H1 (cell line): ENCODE measurements at regions of chr4 and their contacts with region 1.

Region 1: DNA sequence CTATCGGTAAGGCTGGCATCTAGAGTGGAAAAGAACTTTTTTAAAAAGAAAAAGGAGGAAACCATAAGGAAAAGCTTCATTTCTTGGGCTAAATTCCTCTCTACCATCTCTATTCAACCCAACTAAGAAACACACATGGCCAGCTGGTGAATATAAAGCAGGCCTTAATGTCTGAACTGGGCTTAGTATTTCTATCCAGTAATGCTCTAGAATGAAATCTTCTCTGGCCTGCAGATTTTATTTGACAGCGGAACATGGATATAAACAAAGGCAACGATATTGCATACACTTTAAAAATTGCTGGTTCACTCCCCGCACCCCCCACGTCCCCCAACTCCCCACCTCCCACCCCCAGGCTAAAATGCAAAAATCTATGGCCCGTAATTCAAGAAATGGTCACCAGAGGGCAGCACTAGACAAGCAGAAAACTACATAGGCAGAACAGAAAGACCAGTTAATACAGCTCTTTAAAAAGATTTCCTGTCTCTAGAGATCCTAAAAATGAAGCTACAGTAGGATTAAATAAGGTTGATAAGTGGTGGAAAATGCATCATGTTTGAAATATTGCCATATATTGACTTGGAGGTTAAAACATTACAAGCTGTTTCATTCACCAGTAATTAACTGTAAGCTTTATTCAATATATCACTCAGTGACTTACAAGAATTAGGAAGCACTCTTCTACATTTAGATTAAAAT is 155.2 kb upstream of the GALNT7 start:
- DNase-seq: peak in 1 of 2 experiments; percentile 88
- H3K4me3 ChIP-seq: no peak overlapping the region
- H3K27ac ChIP-seq: no peak overlapping the region
- H3K4me1 ChIP-seq: peaks cover 0 to 3% (median 1%) of the 10 kb centered on the region in 4 experiments; a peak in 4 of 7 replicates
- H3K27me3 ChIP-seq: no peaks in the 10 kb centered on the region
- CTCF ChIP-seq: peak in 2 of 3 experiments; percentile 46 to 69; a peak in 3 of 4 replicates
- EP300 ChIP-seq: no peak
- POLR2A ChIP-seq: no peak
- RAD21 ChIP-seq: peak; percentile 80 to 86

Region 2: GRCh38 chr4:172666711-172667368 is 346.5 kb before region 1 on chr4:
- CTCF ChIA-PET with region 1: no interaction called
- POLR2A ChIA-PET with region 1: no interaction called
- DNase-seq: no peak
- H3K4me3 ChIP-seq: no peak overlapping the region
- H3K27ac ChIP-seq: no peak overlapping the region
- H3K4me1 ChIP-seq: no peaks in the 10 kb centered on the region; a peak in 2 of 7 replicates
- H3K27me3 ChIP-seq: no peaks in the 10 kb centered on the region
- CTCF ChIP-seq: peak in 1 of 3 experiments; percentile 54; a peak in 2 of 4 replicates
- EP300 ChIP-seq: no peak
- POLR2A ChIP-seq: no peak
- RAD21 ChIP-seq: peak; percentile 66 to 71

Region 3: DNA sequence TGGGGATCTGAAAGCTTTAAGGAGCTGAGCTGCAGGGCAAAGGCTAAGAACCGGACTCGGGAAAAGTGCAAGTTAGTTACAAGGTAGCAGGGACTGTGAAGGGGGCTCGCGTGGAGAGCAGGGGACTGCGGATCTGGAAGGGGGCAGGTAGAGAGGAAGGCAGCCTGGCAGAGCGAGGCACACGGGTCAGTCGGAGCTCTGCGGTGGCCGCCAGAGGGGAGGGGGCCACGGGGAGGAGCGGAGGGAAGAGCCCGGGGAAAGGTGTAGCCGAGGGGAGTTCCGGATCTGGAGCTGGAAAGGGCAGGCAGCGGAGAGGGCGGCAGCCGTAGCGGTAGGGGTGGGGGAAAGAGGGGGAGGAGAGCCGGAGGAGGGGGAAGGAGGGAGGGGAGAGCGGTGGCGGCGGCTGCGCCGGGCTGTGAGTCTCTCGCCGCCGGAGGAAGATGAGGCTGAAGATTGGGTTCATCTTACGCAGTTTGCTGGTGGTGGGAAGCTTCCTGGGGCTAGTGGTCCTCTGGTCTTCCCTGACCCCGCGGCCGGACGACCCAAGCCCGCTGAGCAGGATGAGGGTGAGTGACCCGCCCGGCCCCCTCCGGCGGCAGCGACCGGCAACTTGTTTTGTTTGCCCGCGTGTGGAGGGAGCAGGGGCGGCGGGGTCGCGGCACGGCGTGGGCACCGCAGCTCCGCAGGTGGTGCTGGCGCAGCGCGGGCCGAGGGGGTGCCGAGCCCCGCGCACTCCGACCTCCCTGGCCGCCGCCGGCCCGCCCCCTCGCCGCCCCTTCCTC is 155.2 kb after region 1 on chr4 and contains the start of gene GALNT7:
- CTCF ChIA-PET with region 1: interaction called, 13 read pairs
- POLR2A ChIA-PET with region 1: interaction called, 6 read pairs
- DNase-seq: peak; percentile 54 to 83
- H3K4me3 ChIP-seq: peak within 1 kb of the TSS; percentile 82 to 93 (median 86)
- H3K27ac ChIP-seq: peak within 1 kb of the TSS; percentile 86; the same call in 1 of the 2 replicates
- H3K4me1 ChIP-seq: peaks cover 8 to 27% (median 19%) of the 10 kb centered on the region in 4 experiments
- H3K27me3 ChIP-seq: no peaks in the 10 kb centered on the region
- CTCF ChIP-seq: no peak
- EP300 ChIP-seq: peak in 1 of 2 experiments; percentile 34; a peak in 1 of 3 replicates
- POLR2A ChIP-seq: peak; percentile 58 to 78
- RAD21 ChIP-seq: no peak
- total RNA-seq, gene GALNT7: 78.9 and 85.5 TPM in 2 replicates

Region 4: GRCh38 chr4:173252024-173252935 is 238.9 kb after region 1 on chr4:
- CTCF ChIA-PET with region 1: interaction called, 80 read pairs
- POLR2A ChIA-PET with region 1: interaction called, 7 read pairs
- DNase-seq: no peak
- H3K4me3 ChIP-seq: no peak overlapping the region
- H3K27ac ChIP-seq: no peak overlapping the region
- H3K4me1 ChIP-seq: peaks cover 2 to 23% (median 4%) of the 10 kb centered on the region in 4 experiments; a peak in 5 of 7 replicates
- H3K27me3 ChIP-seq: no peaks in the 10 kb centered on the region; a peak in 1 of 7 replicates
- CTCF ChIP-seq: no peak
- EP300 ChIP-seq: no peak
- POLR2A ChIP-seq: no peak
- RAD21 ChIP-seq: no peak

Region 5: GRCh38 chr4:173288296-173288695 is 274.9 kb after region 1 on chr4:
- CTCF ChIA-PET with region 1: interaction called, 32 read pairs
- POLR2A ChIA-PET with region 1: no interaction called
- DNase-seq: peak; percentile 31 to 91
- H3K4me3 ChIP-seq: no peak overlapping the region
- H3K27ac ChIP-seq: no peak overlapping the region
- H3K4me1 ChIP-seq: 0 out of 7 replicates have a peak, but pooled peaks cover 0 to 1% (median 0%) of the 10 kb centered on the region in 4 experiments
- H3K27me3 ChIP-seq: peaks cover 0 to 1% (median 0%) of the 10 kb centered on the region in 4 experiments; a peak in 1 of 7 replicates
- CTCF ChIP-seq: peak; percentile 19 to 73 (median 68)
- EP300 ChIP-seq: no peak
- POLR2A ChIP-seq: no peak
- RAD21 ChIP-seq: peak; percentile 66 to 72

Region 6: GRCh38 chr4:173318648-173319211 is 305.3 kb after region 1 on chr4:
- CTCF ChIA-PET with region 1: interaction called, 17 read pairs
- POLR2A ChIA-PET with region 1: interaction called, 3 read pairs
- DNase-seq: no peak
- H3K4me3 ChIP-seq: peak overlapping the region in 1 of 4 experiments; percentile 29; a peak in 1 of 8 replicates
- H3K27ac ChIP-seq: no peak overlapping the region
- H3K4me1 ChIP-seq: peaks cover 0 to 4% (median 3%) of the 10 kb centered on the region in 4 experiments; a peak in 4 of 7 replicates
- H3K27me3 ChIP-seq: no peaks in the 10 kb centered on the region
- CTCF ChIP-seq: no peak
- EP300 ChIP-seq: no peak
- POLR2A ChIP-seq: no peak
- RAD21 ChIP-seq: no peak